RWPE1 (cell line): ENCODE measurements at regions of chr4 and their contacts with region 1.

Region 1: GRCh38 chr4:131091896-131092295 is 1995.9 kb downstream of the C4orf33 start:
- DNase-seq: peak; percentile 3
- H3K27ac ChIP-seq: no peak overlapping the region
- CTCF ChIP-seq: peak; percentile 69

Region 2: GRCh38 chr4:130722361-130722760 is 369.5 kb before region 1 on chr4:
- CTCF ChIA-PET with region 1: no interaction called
- POLR2A ChIA-PET with region 1: no interaction called
- DNase-seq: peak; percentile 22
- H3K27ac ChIP-seq: no peak overlapping the region
- CTCF ChIP-seq: no peak

Region 3: DNA sequence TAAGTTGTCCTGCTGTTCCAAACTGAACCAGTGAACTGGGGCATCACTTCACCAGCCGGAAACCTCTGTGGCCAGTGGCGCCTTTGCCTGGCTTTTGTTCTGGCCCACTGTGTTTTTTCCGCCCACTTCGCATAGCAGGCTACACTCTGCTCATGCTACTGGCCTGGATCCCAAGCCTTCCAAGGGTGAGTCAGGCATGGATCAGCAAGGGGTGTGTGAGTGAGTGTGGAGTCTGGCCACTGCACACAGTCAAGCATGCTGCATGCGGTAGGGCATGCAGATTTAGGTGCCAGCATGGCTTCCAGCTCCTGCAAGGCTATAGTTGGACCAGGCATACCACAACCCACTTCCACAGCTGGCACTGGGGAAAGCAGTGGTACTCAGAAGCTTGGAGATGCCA is 28.0 kb before region 1 on chr4:
- CTCF ChIA-PET with region 1: interaction called, 10 read pairs
- POLR2A ChIA-PET with region 1: no interaction called
- DNase-seq: no peak
- H3K27ac ChIP-seq: no peak overlapping the region
- CTCF ChIP-seq: no peak